ENCODE measurements at regions of chr4 and their contacts with region 1.

Region 1: DNA sequence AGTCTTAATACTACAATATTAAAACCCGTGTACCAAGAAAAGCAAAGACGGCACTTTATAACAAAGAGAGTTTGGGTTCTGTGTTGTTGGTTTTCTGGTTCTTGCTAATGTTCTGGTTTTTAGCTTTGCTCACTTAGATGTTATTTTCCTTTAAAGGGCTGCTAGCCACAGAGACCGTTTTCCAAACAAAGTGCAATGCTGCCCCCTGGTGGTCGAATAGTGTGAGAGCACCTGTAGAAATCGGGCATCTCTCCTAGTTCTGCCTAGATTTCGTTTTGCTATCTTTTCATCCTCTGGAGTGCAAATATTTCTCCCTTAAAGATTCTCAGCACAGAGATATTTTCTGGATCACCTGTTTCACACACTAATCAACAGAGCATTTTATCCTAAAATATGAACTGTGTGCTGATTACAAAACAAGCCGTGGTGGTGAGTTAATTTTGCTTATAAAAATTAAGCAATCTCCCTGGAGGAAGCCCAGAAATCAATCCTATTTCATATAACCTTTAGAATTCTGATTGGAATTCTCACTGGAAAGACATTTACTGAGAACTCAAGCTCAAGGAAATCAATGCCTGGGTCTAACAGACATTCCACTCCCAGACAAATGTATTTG is 334.5 kb upstream of the NOCT start:
- DNase-seq: peak; percentile 65
- H3K4me3 ChIP-seq: no peak overlapping the region
- H3K27ac ChIP-seq: no peak overlapping the region
- H3K27me3 ChIP-seq: no peaks in the 10 kb centered on the region
- CTCF ChIP-seq: peak; percentile 85

Region 2: GRCh38 chr4:138035781-138036258 is 645.3 kb before region 1 on chr4:
- CTCF ChIA-PET with region 1: interaction called, 43 read pairs
- POLR2A ChIA-PET with region 1: no interaction called
- DNase-seq: no peak
- H3K4me3 ChIP-seq: no peak overlapping the region
- H3K27ac ChIP-seq: no peak overlapping the region
- H3K27me3 ChIP-seq: no peaks in the 10 kb centered on the region
- CTCF ChIP-seq: peak; percentile 68

Region 3: DNA sequence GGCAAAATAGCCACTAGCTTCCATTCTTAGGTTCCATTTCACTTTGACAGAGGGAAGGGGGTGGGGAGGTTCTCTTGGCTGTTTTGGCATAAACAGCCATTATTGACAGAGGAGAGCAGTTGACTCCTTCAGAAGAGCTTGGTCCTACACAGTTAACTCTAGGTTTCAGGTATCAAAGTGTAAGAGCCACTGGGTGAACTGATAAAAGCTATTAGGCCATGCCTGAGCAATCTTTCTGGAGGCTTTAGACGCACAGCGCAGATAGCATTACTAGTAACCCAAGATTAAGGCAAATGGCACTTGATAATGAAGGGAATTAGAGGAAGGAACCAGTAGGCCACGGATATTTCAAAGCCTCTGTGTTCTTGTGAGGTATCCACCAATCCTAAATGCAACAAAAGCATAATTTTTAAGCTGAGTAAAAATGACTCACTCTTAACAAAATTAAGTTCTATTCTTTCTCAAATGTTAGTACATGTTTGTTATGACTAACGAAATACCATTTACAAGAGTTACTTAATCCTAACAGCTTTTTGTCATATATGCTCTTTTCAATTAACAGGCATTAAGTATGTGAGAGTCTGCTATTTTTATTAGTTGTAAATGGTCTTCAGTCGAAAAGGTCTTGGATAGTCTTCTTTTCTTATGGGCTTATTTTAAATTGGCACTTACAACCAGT is 492.6 kb before region 1 on chr4:
- CTCF ChIA-PET with region 1: interaction called, 21 read pairs
- POLR2A ChIA-PET with region 1: no interaction called
- DNase-seq: no peak
- H3K4me3 ChIP-seq: no peak overlapping the region
- H3K27ac ChIP-seq: no peak overlapping the region
- H3K27me3 ChIP-seq: no peaks in the 10 kb centered on the region
- CTCF ChIP-seq: no peak

Region 4: GRCh38 chr4:138576684-138577083 is 104.4 kb before region 1 on chr4:
- CTCF ChIA-PET with region 1: interaction called, 32 read pairs
- POLR2A ChIA-PET with region 1: no interaction called
- DNase-seq: peak; percentile 34
- H3K4me3 ChIP-seq: no peak overlapping the region
- H3K27ac ChIP-seq: no peak overlapping the region
- H3K27me3 ChIP-seq: no peaks in the 10 kb centered on the region
- CTCF ChIP-seq: peak; percentile 66

Region 5: DNA sequence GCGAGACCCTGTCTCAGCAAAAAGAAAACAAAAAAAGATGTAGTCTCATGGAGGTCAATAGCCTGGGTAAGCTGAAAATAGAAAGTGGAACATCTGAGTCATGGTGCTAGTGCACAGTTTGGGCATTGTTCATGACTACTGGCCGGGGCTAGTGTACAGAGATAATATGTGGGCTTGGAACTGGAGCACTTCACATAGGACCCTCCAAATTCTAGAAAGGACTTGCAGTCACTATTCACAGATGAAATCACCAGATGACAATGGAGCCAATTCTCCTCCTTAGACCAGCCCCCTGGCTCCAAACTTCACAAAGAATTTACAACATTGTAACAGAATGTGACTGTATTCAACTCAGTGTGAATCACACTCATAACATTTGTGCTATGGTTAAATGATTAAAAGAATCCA is 71.2 kb before region 1 on chr4:
- CTCF ChIA-PET with region 1: no interaction called
- POLR2A ChIA-PET with region 1: no interaction called
- DNase-seq: no peak
- H3K4me3 ChIP-seq: no peak overlapping the region
- H3K27ac ChIP-seq: peak overlapping the region; percentile 47
- H3K27me3 ChIP-seq: no peaks in the 10 kb centered on the region
- CTCF ChIP-seq: no peak

Region 6: DNA sequence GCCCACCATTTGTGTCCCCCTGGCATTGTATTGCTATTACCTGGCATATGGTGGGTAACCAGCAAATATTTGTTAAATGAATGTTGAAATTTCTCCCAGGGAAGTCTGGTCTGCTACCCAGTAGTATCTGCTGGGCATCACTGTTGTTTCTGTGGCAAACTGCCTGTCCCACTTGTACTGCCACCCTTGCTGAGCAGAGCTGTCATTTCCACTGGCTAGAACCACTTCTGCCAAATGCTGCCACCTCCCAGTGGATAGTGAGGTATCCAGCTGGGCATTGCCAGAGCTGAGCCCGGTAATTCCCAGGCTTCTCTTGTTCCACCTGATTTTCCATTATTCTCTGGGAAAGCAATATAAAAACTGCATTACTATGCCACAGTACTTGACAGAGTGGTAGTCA is 147.8 kb after region 1 on chr4:
- CTCF ChIA-PET with region 1: no interaction called
- POLR2A ChIA-PET with region 1: no interaction called
- DNase-seq: no peak
- H3K4me3 ChIP-seq: no peak overlapping the region
- H3K27ac ChIP-seq: no peak overlapping the region
- H3K27me3 ChIP-seq: peaks cover 9% of the 10 kb centered on the region
- CTCF ChIP-seq: no peak

Region 7: DNA sequence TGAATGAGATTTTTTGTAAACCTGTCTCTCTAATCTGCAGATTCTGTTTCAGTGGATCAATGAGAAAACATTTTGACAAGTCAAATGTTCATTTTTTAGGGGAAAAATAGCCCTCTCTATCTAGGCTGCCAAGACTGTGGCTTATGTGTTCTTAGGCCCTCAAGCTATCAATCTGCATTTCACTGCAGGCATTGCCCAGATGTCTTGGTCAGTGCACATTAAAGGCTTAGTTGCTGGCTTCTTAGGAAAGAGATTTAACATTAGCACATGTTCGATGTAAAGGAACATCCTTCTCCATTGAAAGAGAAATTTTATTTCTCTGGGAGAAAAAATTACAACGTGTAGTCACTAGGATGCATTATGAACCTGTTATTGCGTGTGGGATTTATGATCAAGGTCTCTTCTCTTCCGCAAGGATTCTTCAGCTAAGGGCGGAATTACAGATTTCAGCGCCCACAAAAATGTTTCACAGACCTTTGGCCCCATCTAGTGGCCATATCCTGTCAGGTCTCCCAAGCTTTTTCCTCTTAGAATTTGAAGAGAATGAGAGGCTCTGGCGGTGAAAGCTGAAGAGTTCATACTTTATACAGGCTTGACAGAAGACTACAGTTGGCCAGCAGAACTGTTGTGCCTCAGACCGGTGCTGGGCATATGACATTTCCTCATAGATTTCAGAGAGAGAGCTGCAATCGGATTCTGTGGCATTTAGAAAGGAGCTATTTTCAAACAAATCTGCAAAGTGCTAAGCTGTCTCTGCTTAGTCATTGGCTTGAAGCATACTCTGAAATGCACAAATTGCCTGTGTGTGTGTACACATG is 189.8 kb after region 1 on chr4:
- CTCF ChIA-PET with region 1: interaction called, 66 read pairs
- POLR2A ChIA-PET with region 1: no interaction called
- DNase-seq: peak; percentile 55
- H3K4me3 ChIP-seq: no peak overlapping the region
- H3K27ac ChIP-seq: no peak overlapping the region
- H3K27me3 ChIP-seq: no peaks in the 10 kb centered on the region
- CTCF ChIP-seq: peak; percentile 83